Activated CD4-positive, alpha-beta T cell treated with anti-CD3 and anti-CD28 coated beads for 36 hours (primary cell): ENCODE measurements at regions of chr3 and their contacts with region 1.

Region 1: DNA sequence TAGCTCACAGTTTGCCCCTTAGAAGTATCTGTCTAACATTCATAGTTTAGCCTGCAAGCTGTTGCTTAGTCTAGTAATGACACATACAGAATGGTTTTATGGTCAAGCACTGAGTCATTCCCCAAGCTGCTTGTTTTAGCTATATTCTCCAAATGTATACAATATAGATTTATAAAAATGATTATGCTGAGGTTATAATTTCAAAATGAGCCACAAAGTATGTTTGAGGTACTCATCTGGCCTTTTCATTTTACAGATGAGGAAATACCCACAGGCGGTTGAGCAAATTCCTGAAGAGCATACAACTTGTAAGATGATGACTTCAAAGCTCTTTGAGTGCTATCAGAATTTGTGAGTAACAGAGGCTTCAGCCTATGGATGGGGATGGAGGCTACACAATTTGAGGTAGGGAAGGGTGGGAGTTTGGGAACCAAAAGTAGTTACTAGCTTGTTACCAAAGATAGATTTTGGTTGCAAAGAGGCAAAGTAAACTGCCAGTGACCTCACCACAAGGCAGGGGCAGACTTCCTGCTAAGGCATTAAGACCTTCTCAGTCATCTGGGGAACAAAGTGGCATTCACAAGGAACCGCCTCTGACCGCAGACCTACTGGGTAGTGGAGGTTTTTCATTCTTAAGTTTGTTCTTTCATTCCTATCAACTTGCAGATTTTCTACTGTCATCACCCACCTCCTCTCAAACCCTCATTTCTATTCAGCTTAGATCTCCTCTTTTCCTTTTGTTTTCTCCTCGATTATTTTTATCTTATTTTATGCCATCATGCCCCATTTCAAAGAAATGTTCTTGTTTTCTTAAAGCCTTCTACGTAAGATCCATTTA is 257.2 kb upstream of the NECTIN3 start:
- DNase-seq: peak; percentile 70
- ATAC-seq: peak; percentile 79
- H3K4me3 Mint-ChIP-seq: no peak overlapping the region
- H3K27ac Mint-ChIP-seq: peak overlapping the region; percentile 67
- H3K4me1 Mint-ChIP-seq: peaks cover 10% of the 10 kb centered on the region
- H3K27me3 Mint-ChIP-seq: peaks cover 23% of the 10 kb centered on the region

Region 2: DNA sequence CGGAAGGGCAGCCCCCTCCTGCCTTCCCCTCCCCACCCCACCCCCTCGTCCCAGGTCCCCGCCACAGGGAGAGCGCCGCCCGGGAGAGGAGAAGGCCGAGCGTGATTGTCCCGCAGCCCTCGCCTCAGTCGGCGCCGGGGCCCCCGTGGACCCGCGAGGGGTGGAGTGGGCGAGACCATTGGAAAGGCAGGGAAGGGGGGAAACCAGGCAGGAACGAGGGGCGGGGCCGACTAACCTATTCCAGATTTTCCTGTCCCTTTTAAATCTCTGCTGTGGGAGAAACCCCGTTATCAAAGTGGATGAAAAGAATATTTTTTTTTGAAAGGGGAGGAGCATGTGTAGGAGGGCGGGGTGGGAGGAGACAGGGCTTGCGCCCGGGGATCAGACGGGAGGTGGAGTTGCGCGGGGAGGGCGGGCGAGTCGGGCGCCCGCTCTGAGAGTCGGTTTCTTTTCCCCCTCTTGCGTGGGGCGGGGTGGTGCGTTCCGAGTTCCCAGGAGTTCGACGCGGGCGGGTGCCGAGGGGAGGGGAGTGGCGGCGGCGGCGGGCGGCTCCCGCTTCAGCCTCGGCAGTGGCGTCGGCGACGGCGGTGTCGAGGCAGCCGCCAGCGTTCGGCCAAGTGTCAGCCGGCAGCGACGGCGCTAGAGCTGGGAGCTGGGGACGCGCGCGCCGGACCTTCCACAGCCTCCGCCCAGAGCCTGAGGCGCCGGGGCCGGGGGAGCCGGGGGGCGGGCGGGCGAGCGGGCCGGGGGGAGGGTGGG is 257.0 kb after region 1 on chr3 and contains the start of gene NECTIN3:
- CTCF ChIA-PET with region 1: no interaction called
- POLR2A ChIA-PET with region 1: no interaction called
- intact Hi-C with region 1: loop called in 1 of 2 experiments (anchors 10 kb)
- DNase-seq: peak; percentile 91
- ATAC-seq: peak; percentile 95
- H3K4me3 Mint-ChIP-seq: peak within 1 kb of the TSS; percentile 83
- H3K27ac Mint-ChIP-seq: peak within 1 kb of the TSS; percentile 80
- H3K4me1 Mint-ChIP-seq: peaks cover 28% of the 10 kb centered on the region
- H3K27me3 Mint-ChIP-seq: peaks cover 40% of the 10 kb centered on the region
- total RNA-seq, gene NECTIN3: 5.1 to 5.9 TPM

Region 3: GRCh38 chr3:111238885-111239284 is 424.5 kb after region 1 on chr3:
- CTCF ChIA-PET with region 1: no interaction called
- POLR2A ChIA-PET with region 1: no interaction called
- intact Hi-C with region 1: loop called in 1 of 2 experiments (anchors 10 kb)
- DNase-seq: no peak
- ATAC-seq: peak; percentile 94
- H3K4me3 Mint-ChIP-seq: no peak overlapping the region
- H3K27ac Mint-ChIP-seq: no peak overlapping the region
- H3K4me1 Mint-ChIP-seq: peaks cover 15% of the 10 kb centered on the region
- H3K27me3 Mint-ChIP-seq: no peaks in the 10 kb centered on the region

Region 4: DNA sequence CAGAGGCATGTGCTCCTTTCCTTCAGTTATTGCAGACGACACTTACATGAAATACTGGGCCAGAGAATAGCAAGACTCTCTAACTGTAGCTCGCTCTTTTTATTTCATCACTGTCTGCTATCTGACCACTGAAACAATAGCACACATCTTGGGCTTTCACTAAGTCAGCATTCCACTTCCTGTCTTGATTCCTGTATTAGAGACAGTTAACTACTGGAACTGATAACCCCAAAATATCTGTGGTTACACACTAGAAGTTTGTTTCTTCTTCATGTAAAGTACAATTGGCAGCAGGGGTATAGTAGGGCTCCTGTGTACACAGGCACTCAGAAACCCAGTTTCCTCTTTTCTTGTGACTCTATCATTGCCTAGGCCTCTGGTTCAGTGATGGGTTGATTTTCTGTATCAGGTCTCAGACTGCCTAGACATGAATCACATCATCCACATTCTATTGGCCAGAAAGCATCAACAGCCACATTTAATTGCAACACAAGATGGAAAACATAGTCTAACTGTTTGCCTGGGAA is 497.4 kb after region 1 on chr3:
- CTCF ChIA-PET with region 1: no interaction called
- POLR2A ChIA-PET with region 1: no interaction called
- intact Hi-C with region 1: loop called in 1 of 2 experiments (anchors 5 kb)
- DNase-seq: no peak
- ATAC-seq: peak; percentile 83
- H3K4me3 Mint-ChIP-seq: no peak overlapping the region
- H3K27ac Mint-ChIP-seq: peak overlapping the region; percentile 81
- H3K4me1 Mint-ChIP-seq: peaks cover 22% of the 10 kb centered on the region
- H3K27me3 Mint-ChIP-seq: no peaks in the 10 kb centered on the region

Region 5: DNA sequence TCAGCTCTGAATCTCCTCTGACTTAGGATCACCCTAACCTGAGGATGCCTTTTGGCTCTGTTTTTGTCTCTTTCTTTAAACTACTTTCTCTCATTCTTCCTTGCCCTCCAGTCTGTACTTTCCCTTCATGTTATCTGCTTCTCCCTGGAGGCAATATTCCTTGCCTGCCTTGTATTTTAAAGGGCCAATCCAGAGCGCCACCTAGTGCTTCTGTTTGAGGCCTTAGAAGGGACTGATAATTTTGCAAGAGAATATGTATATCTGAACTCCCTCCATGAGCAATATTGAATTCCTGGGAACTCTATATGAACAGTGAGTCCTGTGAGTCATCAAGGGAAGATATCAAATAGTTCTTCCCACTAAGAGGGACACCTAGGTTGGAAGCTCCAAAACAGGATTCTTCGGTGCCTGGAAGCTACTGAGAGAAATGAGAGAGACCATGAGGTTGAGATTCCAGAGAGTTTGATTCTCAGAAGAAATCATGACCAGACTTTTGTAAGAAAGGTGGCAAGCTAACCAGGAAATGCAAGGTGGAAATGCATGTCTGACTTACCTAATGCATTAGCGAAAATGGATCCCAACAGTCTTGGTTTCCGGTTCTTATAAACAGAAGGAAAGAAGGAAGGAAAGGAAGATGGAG is 523.8 kb after region 1 on chr3:
- CTCF ChIA-PET with region 1: no interaction called
- POLR2A ChIA-PET with region 1: no interaction called
- intact Hi-C with region 1: loop called in 1 of 2 experiments (anchors 5 kb)
- DNase-seq: peak; percentile 63
- ATAC-seq: no peak
- H3K4me3 Mint-ChIP-seq: no peak overlapping the region
- H3K27ac Mint-ChIP-seq: no peak overlapping the region
- H3K4me1 Mint-ChIP-seq: peaks cover 13% of the 10 kb centered on the region
- H3K27me3 Mint-ChIP-seq: no peaks in the 10 kb centered on the region

Region 6: GRCh38 chr3:111610189-111610588 is 795.8 kb after region 1 on chr3:
- CTCF ChIA-PET with region 1: interaction called, 3 read pairs
- POLR2A ChIA-PET with region 1: no interaction called
- intact Hi-C with region 1: loop called in 1 of 2 experiments (anchors 1 kb)
- DNase-seq: peak; percentile 53
- ATAC-seq: peak; percentile 56
- H3K4me3 Mint-ChIP-seq: peak overlapping the region; percentile 62
- H3K27ac Mint-ChIP-seq: peak overlapping the region; percentile 98
- H3K4me1 Mint-ChIP-seq: peaks cover 98% of the 10 kb centered on the region
- H3K27me3 Mint-ChIP-seq: no peaks in the 10 kb centered on the region